Sigmoid colon (tissue), 7 donors: ENCODE measurements at regions of chr1 and their contacts with region 1.

Region 1: DNA sequence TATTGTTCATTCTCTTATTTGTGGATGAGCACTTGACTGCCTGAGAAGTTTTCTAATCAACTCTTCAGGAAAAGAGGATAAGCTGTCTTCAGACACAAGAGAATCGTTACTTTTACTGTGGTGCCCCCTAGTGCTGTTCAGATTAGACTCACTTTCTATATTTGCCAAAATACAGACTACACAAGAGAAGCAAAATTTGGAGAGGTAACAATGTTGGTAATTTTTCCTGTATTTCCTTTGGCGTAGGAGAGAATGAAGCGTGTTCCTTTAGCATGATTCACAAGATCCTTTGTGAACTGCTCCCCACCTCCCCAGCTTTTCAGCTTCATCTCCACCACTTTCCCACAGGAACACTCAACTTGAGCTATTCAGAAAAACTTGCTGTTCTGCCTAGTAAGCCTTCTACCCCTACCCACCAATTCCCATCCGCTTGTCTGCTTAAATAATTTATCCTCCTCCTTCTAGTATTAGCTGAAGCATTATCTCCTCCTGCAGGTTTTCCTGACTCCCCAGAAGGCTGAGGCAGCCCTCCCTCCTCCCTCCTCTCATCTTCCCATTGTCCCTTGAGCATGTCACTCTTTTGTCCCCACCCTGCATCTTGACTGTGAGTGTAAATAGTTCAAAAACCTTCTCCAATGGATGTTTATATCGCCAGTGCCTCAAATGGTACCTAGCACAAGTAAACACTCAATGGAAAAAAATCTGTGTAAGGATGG is 4.5 kb downstream of the TNFSF4 start:
- DNase-seq: no peak
- H3K4me3 ChIP-seq: no peak overlapping the region
- H3K27ac ChIP-seq: peak overlapping the region in 1 of 4 donors; percentile 20
- H3K4me1 ChIP-seq: peaks cover 0 to 28% (median 11%) of the 10 kb centered on the region in 4 donors
- H3K27me3 ChIP-seq: no peaks in the 10 kb centered on the region
- CTCF ChIP-seq: peak; percentile 17 to 58 (median 46)
- EP300 ChIP-seq: no peak
- POLR2A ChIP-seq: no peak

Region 2: GRCh38 chr1:172826096-172826743 is 376.4 kb before region 1 on chr1:
- intact Hi-C with region 1: loop called (anchors 2 kb)
- DNase-seq: peak; percentile 77
- H3K4me3 ChIP-seq: peak overlapping the region in 3 of 4 donors; percentile 8 to 20 (median 14)
- H3K27ac ChIP-seq: peak overlapping the region; percentile 68 to 85 (median 70)
- H3K4me1 ChIP-seq: peaks cover 0 to 17% (median 11%) of the 10 kb centered on the region in 4 donors
- H3K27me3 ChIP-seq: no peaks in the 10 kb centered on the region
- CTCF ChIP-seq: peak; percentile 33 to 55 (median 44)
- EP300 ChIP-seq: peak in 3 of 4 donors; percentile 40 to 89 (median 57)
- POLR2A ChIP-seq: no peak

Region 3: DNA sequence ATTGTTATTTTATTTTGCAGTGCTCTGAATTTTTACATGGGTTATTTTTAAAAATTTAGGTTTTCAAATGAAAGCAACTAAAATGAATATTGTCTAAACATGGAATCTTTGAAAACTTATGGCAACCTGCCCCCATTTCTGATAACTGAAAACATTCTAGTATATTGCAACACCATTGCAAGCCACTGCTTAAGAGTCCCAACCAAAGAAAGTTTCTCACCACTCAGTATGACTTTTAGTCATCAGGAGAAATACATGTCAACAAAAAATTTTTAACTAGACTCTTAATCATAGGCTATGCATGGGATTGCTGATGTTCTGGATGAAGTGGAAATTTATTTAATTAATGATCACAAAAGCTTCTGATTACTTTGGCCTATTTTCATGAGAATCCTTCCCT is 263.9 kb before region 1 on chr1:
- intact Hi-C with region 1: loop called (anchors 10 kb)
- DNase-seq: no peak
- H3K4me3 ChIP-seq: no peak overlapping the region
- H3K27ac ChIP-seq: no peak overlapping the region
- H3K4me1 ChIP-seq: peaks cover 0 to 32% (median 26%) of the 10 kb centered on the region in 4 donors
- H3K27me3 ChIP-seq: no peaks in the 10 kb centered on the region
- CTCF ChIP-seq: no peak
- EP300 ChIP-seq: no peak
- POLR2A ChIP-seq: no peak

Region 4: GRCh38 chr1:173122958-173123852 is 79.4 kb before region 1 on chr1:
- intact Hi-C with region 1: loop called (anchors 5 kb)
- DNase-seq: peak; percentile 93
- H3K4me3 ChIP-seq: peak overlapping the region in 3 of 4 donors; percentile 28 to 43 (median 38)
- H3K27ac ChIP-seq: peak overlapping the region; percentile 77 to 86 (median 81)
- H3K4me1 ChIP-seq: peaks cover 0 to 18% (median 14%) of the 10 kb centered on the region in 4 donors
- H3K27me3 ChIP-seq: no peaks in the 10 kb centered on the region
- CTCF ChIP-seq: peak in 1 of 4 experiments; percentile 2
- EP300 ChIP-seq: peak in 2 of 4 donors; percentile 31 to 67
- POLR2A ChIP-seq: no peak

Region 5: GRCh38 chr1:173532237-173532636 is 329.6 kb after region 1 on chr1:
- intact Hi-C with region 1: no loop called
- DNase-seq: no peak
- H3K4me3 ChIP-seq: peak overlapping the region in 2 of 4 donors; percentile 2 to 12
- H3K27ac ChIP-seq: peak overlapping the region in 2 of 4 donors; percentile 6 to 26
- H3K4me1 ChIP-seq: peaks cover 0 to 19% (median 9%) of the 10 kb centered on the region in 4 donors
- H3K27me3 ChIP-seq: no peaks in the 10 kb centered on the region
- CTCF ChIP-seq: no peak
- EP300 ChIP-seq: no peak
- POLR2A ChIP-seq: no peak